WTC11 (cell line): ENCODE measurements at regions of chr7 and their contacts with region 1.

Region 1: GRCh38 chr7:105990726-105991453 is 27.8 kb downstream of the CDHR3 start:
- DNase-seq: peak; percentile 68
- ATAC-seq: peak; percentile 96
- H3K4me3 Mint-ChIP-seq: peak overlapping the region; percentile 14; the same call in 1 of the 2 replicates
- H3K27ac Mint-ChIP-seq: peak overlapping the region; percentile 90
- H3K4me1 Mint-ChIP-seq: peaks cover 68% of the 10 kb centered on the region
- H3K27me3 Mint-ChIP-seq: peaks cover 5% of the 10 kb centered on the region; the same call in 1 of the 2 replicates
- CTCF ChIP-seq: no peak

Region 2: DNA sequence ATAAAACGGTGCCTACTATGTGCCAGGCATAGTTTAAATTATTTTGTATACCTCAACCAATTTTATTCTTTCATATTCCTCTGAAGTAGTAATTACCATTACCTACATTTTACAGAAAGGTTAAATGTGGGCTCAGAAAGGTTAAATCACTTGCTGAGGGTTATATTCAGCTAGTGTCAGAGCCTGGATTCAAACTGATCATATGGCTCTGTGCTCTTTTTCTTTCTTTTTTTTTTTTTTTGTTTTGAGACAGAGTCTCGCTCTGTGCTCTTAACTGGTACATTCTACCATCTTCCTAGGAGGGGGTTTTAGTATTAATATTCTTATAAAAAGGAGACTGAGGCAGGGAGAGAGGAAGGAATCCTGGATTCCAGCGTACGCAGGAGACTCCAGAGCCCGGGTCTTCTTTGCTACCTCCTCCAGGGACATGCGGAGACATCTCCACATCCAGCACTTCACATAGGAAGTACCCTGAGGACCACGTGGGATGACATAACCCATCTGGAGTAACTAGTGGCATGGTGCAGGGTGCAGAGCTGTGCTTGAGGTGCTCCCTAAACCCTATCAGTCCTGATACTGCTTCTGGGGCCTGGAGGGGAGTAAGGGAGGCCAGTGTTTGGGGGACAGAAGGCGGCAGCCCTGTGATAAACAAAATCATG is 84.9 kb before region 1 on chr7:
- CTCF ChIA-PET with region 1: interaction called, 13 read pairs
- POLR2A ChIA-PET with region 1: no interaction called
- DNase-seq: no peak
- ATAC-seq: peak; percentile 63
- H3K4me3 Mint-ChIP-seq: peak overlapping the region; percentile 32; the same call in 1 of the 2 replicates
- H3K27ac Mint-ChIP-seq: peak overlapping the region; percentile 96
- H3K4me1 Mint-ChIP-seq: peaks cover 38% of the 10 kb centered on the region
- H3K27me3 Mint-ChIP-seq: no peaks in the 10 kb centered on the region
- CTCF ChIP-seq: no peak

Region 3: DNA sequence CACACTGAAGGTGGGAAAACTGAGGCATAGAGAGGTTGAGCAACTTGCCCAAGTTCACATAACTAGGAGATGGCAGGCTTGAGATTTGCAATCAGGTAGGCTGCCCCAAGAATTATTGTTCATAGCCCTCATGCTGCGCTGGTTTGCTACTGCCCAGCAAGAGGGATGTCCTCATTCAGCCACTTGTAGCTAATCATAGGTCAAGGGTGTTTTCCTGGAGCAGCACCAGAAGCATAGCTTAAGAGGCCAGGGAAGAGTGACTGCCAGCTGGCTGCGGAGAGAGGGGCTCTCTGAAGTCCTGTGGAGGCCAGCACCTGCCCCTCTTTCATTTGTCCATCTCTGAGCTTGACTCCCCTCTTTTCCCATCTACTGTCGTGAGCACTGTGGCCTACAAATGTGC is 12.9 kb before region 1 on chr7:
- CTCF ChIA-PET with region 1: interaction called, 12 read pairs
- POLR2A ChIA-PET with region 1: no interaction called
- DNase-seq: no peak
- ATAC-seq: no peak
- H3K4me3 Mint-ChIP-seq: no peak overlapping the region
- H3K27ac Mint-ChIP-seq: no peak overlapping the region
- H3K4me1 Mint-ChIP-seq: peaks cover 34% of the 10 kb centered on the region
- H3K27me3 Mint-ChIP-seq: no peaks in the 10 kb centered on the region; the same call in 1 of the 2 replicates
- CTCF ChIP-seq: no peak

Region 4: GRCh38 chr7:106009403-106010226 is 18.7 kb after region 1 on chr7:
- CTCF ChIA-PET with region 1: interaction called, 24 read pairs
- POLR2A ChIA-PET with region 1: no interaction called
- DNase-seq: peak; percentile 95
- ATAC-seq: peak; percentile 94
- H3K4me3 Mint-ChIP-seq: peak overlapping the region; percentile 56
- H3K27ac Mint-ChIP-seq: peak overlapping the region; percentile 98
- H3K4me1 Mint-ChIP-seq: peaks cover 20% of the 10 kb centered on the region
- H3K27me3 Mint-ChIP-seq: peaks cover 30% of the 10 kb centered on the region
- CTCF ChIP-seq: peak; percentile 97

Region 5: DNA sequence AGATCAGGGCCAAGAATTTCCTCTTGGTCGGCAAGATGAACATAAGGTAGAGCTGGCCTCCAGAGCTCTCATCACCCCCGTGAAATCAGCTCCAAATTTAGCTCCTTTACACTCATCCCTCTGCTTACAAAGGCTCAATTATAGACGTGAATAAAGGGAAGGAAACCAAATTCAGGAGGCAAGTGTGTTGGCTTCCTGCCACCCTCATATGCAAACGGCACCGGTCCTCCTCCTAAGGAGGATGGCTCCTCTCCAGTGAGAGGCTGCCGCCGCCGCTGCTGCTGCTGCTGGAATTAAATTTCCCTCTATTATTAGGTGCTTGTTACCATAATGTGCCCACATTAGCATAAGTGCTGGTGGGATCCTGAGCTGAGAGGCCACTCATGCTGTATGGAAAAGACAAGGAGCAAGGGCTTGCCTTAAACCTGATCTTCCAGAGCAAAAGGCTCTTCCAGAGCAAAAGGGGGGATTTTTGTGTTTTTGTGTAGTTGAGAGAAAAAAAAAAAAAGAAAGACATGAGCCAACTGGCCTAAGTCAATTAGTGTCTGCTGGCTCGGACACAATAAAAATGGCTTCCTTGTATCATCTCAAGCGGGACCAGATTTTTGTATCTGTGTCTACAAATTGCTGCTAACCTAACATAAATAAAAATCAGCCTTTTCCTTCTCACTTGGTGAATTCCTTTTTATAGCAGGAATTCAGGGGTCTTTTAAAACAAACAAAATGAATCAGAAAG is 40.6 kb after region 1 on chr7:
- CTCF ChIA-PET with region 1: interaction called, 12 read pairs
- POLR2A ChIA-PET with region 1: no interaction called
- DNase-seq: no peak
- ATAC-seq: peak; percentile 58
- H3K4me3 Mint-ChIP-seq: no peak overlapping the region; the same call in 1 of the 2 replicates
- H3K27ac Mint-ChIP-seq: peak overlapping the region; percentile 89
- H3K4me1 Mint-ChIP-seq: peaks cover 43% of the 10 kb centered on the region
- H3K27me3 Mint-ChIP-seq: 0 out of 2 replicates have a peak, but pooled peaks cover 3% of the 10 kb centered on the region
- CTCF ChIP-seq: no peak

Region 6: GRCh38 chr7:106041140-106041717 is 50.3 kb after region 1 on chr7:
- CTCF ChIA-PET with region 1: interaction called, 17 read pairs
- POLR2A ChIA-PET with region 1: no interaction called
- DNase-seq: peak; percentile 72
- ATAC-seq: peak; percentile 71
- H3K4me3 Mint-ChIP-seq: no peak overlapping the region
- H3K27ac Mint-ChIP-seq: no peak overlapping the region
- H3K4me1 Mint-ChIP-seq: peaks cover 23% of the 10 kb centered on the region
- H3K27me3 Mint-ChIP-seq: no peaks in the 10 kb centered on the region; the same call in 1 of the 2 replicates
- CTCF ChIP-seq: peak; percentile 97